Aorta (tissue), 5 donors: ENCODE measurements at regions of chr1 and their contacts with region 1.

Region 1: DNA sequence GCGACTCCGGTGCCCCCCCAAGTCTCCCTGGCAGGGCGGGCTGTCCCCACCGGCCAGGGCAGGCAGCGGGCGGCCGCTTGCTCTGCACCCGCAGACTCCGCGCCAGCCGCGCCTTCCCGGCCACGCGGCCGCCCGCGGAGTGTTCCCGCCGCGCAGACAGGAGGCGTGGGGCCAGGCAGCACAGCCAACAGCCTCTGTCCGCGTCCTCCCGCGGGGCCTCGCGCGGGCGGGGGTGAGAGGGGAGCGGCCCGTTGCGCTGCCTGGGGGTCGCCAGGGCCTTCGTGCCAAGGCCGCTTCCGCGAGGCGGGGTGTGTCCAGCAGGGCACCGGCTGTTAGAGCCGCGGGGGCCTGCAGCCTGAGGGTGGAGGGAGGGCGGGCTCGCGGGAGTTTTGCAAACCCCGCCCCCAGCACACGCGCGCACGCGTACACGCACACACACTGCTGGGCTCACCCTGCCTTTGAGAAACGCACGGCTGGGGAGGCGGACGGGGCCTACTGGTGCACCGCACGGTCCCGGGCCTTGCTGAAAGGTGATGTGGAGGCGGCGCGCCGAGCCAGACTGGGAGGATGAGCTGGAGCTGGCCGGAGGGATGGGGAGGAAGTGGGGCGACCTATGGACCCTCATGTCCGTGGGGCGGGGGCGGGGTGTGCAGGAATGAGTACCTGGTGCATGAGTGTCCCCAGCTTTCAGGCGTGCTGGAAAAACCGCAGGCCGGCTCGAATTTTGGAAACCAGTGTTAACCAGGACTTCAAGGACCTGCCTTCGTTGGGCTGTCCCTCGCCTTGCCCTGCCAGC is 41.5 kb downstream of the KIAA1614 start:
- DNase-seq: peak; percentile 80 to 91
- ATAC-seq: peak; percentile 81
- H3K4me3 ChIP-seq: peak overlapping the region; percentile 22 to 35
- H3K27ac ChIP-seq: no peak overlapping the region
- H3K4me1 ChIP-seq: no peaks in the 10 kb centered on the region
- H3K27me3 ChIP-seq: no peaks in the 10 kb centered on the region

Region 2: GRCh38 chr1:180881806-180882509 is 72.2 kb before region 1 on chr1:
- intact Hi-C with region 1: no loop called
- DNase-seq: no peak
- ATAC-seq: peak; percentile 56
- H3K4me3 ChIP-seq: no peak overlapping the region
- H3K27ac ChIP-seq: no peak overlapping the region
- H3K4me1 ChIP-seq: no peaks in the 10 kb centered on the region
- H3K27me3 ChIP-seq: no peaks in the 10 kb centered on the region

Region 3: DNA sequence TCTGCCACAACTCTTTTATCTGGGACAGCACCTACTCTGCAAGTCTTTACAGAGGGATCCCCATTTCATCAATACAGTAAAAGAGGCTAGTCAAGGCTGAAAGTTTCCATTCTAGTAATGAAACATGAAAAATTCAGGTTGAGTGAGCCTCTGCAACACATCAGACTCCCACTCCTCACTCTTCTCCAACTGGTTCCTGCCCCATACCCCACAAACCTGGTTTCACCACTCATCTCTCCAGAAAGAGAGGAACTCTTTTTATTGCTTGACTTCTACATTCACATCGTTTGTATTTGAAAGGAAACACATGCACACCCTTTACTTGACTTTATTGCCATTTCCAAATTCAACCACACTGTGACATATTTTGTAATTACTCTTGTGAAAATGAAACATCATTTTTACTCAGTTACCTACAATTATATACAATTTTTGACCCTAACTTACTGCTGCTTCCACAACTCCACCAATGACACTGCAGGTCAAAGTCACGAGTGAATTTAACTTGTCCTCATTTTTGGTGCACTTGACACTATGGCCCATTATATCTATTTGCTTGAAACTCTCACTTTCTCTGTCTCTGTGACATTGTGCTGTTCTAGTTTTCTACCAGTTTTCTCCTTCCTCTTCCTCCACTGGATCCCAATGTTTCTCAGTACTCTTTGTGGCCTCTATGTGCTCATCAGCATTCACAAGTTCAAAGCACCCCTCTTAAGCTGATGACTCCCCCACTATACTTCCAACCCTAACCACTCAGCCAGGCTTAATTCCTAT is 60.5 kb after region 1 on chr1:
- intact Hi-C with region 1: loop called in 1 of 2 experiments (anchors 10 kb)
- DNase-seq: no peak
- ATAC-seq: no peak
- H3K4me3 ChIP-seq: no peak overlapping the region
- H3K27ac ChIP-seq: no peak overlapping the region
- H3K4me1 ChIP-seq: peaks cover 4 to 5% of the 10 kb centered on the region in 2 donors
- H3K27me3 ChIP-seq: no peaks in the 10 kb centered on the region

Region 4: DNA sequence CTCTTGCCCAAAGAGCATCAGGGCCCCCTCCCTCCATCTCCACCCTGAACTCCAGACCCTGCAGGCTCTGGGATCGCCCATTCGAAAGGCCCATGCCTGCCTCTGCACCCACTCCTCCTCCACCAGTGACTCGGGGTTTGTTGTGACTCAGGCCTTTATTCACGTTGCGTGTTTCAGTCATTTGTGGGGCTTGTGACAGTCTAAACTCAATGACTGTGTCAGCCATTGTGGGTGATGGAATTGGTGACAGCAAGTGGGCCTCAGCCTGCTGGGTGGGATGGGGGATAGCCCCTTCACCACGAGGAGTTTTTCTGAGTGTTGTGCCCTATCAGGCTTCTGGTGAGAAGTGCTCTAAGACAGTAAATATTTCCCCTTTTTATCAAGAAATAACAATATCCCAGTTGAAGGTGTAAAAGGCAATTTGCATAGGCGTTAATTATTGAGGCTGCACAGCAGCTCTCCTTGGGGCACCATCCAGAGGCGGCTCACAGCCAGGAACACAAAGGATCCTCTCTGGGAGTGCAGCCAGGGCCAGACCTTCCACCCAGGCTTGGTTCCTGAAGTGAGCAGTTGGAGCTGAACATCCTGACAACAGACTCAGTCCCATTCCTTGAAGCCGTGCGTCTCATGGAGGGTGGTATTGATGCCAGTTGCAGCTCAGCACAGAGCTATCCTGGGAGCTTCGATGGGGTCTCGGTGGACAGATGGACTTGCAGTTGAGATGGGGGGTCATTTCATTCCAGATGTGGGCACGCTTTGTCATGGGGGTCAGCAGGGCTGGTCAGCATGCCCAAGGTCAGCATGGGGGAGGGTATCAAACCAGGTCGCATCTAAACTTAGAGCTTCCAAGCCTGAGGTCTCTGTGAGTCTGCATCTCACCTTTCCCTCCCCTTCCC is 393.5 kb after region 1 on chr1:
- intact Hi-C with region 1: no loop called
- DNase-seq: no peak
- ATAC-seq: no peak
- H3K4me3 ChIP-seq: no peak overlapping the region
- H3K27ac ChIP-seq: no peak overlapping the region
- H3K4me1 ChIP-seq: no peaks in the 10 kb centered on the region
- H3K27me3 ChIP-seq: no peaks in the 10 kb centered on the region